GM10248 (cell line): ENCODE measurements at regions of chr7 and their contacts with region 1.

Region 1: GRCh38 chr7:8070451-8071180 is 102.0 kb downstream of the GLCCI1 start:
- DNase-seq: no peak
- CTCF ChIP-seq: no peak

Region 2: GRCh38 chr7:8057566-8057965 is 13.1 kb before region 1 on chr7:
- CTCF ChIA-PET with region 1: no interaction called
- POLR2A ChIA-PET with region 1: no interaction called
- DNase-seq: no peak
- CTCF ChIP-seq: no peak

Region 3: GRCh38 chr7:8084836-8085235 is 14.2 kb after region 1 on chr7:
- CTCF ChIA-PET with region 1: interaction called, 18 read pairs
- POLR2A ChIA-PET with region 1: no interaction called
- DNase-seq: no peak
- CTCF ChIP-seq: no peak